GM23248 (cell line): ENCODE measurements at regions of chr17 and their contacts with region 1.

Region 1: DNA sequence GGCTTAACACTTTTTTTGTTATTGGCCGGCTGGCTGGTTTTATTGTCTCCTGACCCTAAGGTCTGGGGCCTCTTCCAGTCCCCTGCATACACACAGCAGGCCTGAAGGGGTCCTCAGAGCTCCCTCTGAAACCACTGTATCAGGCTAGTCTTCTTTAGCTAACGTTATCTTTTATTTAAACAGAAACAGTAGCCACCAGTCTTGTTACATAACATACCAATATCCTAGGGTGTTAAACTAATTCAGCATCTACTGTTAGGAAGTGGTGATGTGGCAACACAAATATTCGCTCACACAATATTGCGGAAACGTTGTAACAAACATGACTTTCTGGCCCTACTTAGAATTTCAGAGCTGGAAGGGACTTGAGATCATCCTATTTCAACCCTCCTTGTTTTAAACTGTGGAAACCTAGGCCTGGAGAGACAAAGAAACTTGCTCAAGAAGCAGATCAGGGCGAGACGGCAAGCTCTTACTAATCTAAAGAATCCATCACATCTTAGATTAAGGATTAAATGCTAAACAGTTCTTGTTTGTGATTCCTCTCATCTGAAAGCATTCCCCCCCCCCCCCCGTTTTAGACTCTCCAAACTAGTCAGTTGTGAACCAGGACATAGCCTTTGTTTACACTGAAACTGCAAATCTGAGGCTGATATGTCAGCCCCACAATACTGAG is 1.7 kb upstream of the YPEL2 start:
- DNase-seq: peak; percentile 85
- H3K4me3 ChIP-seq: no peak overlapping the region; the same call in 1 of the 2 replicates
- H3K27ac ChIP-seq: peak overlapping the region; percentile 49
- H3K4me1 ChIP-seq: peaks cover 28% of the 10 kb centered on the region
- H3K27me3 ChIP-seq: no peaks in the 10 kb centered on the region

Region 2: DNA sequence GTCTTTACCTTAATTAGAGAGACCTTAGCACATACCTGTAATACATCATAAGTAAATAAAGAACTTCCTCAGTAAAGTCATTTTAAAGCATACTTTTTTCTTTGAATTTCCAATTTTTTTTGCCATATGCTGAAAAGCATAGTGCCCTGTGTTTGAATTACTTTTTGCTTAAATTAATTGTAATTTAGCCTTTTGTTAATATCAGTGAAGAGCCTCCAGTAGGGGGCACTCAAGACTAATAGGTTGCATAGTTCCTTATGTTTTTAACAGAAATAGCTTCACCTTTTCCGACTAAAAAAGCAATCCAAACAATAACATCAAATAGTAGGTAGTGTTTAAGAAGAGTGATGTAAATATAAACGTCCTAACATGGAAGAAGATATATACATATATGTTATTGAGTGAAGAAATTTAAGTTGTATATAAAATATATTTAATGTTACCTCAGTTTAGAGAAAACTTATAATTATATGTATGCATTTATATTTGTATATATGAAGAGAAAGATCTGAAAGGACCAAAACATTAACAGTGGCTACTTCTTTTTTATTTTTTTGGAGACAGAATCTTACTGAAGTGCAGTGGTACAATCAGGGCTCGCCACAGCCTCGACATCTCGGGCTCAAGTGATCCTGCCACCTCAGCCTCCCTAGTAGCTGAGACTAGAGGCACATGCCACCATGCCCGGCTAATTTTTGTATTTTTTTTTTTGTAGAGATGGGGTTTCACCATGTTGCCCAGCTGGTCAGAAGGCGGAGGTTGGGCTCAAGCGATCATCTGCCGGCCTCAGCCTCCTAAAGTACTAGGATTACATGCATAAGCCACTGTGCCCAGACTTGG is 618.6 kb before region 1 on chr17:
- in situ Hi-C with region 1: no loop called
- DNase-seq: peak; percentile 77
- H3K4me3 ChIP-seq: no peak overlapping the region
- H3K27ac ChIP-seq: no peak overlapping the region
- H3K4me1 ChIP-seq: no peaks in the 10 kb centered on the region
- H3K27me3 ChIP-seq: no peaks in the 10 kb centered on the region

Region 3: DNA sequence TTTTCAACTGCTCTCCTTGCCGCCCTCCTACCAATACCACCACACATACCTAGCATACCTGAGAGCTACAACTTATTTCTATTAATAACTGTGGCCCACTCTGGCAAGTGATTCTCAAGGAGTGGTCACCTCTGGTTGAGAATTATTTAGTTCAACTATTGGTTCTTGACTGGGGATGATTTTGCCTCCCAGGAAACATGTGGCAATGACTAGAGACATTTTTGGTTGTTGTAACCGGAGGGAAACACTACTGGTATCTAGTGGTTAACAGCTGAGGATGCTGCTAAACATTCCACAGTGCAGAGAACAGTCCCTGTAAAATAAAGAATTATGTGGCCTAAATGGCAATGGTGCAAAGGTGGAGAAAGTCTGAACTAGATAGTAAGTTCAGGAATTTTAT is 319.8 kb before region 1 on chr17:
- in situ Hi-C with region 1: no loop called
- DNase-seq: no peak
- H3K4me3 ChIP-seq: no peak overlapping the region
- H3K27ac ChIP-seq: no peak overlapping the region
- H3K4me1 ChIP-seq: no peaks in the 10 kb centered on the region
- H3K27me3 ChIP-seq: no peaks in the 10 kb centered on the region

Region 4: DNA sequence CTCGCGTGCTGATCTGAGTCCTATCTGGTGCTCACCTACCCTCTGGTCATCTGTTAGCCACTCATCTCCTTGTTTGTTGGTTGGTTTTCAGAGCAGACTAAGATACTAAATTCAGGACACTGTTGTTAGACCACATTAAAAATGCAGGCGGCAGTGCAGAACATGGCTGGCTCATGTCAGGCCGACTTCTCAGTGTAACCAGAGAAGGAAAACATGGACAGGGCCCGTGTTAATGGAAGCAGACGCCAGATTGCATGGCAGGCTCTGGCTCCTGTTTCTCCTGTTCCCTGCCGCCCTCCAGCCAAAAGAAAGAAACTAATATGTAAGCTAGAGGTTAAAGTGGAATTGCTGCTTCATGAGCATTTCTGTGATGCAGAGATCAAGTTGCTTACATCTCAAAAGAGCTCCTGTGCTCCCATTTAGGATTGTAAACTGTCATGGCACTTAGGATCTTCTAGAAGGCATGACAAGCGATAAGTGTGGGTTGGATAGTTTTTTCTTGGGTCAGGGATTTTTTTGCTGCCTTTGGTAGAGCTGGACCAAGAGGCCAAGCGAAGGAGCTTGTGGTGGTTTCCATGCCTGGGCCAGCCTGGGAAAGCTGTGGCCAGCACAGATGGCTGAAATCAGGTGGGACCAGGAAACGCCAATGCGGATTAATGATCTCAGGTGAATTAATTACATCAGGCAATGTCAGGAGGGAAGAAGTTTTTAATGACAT is 57.7 kb after region 1 on chr17:
- in situ Hi-C with region 1: no loop called
- DNase-seq: peak; percentile 24
- H3K4me3 ChIP-seq: no peak overlapping the region
- H3K27ac ChIP-seq: no peak overlapping the region
- H3K4me1 ChIP-seq: no peaks in the 10 kb centered on the region
- H3K27me3 ChIP-seq: no peaks in the 10 kb centered on the region

Region 5: DNA sequence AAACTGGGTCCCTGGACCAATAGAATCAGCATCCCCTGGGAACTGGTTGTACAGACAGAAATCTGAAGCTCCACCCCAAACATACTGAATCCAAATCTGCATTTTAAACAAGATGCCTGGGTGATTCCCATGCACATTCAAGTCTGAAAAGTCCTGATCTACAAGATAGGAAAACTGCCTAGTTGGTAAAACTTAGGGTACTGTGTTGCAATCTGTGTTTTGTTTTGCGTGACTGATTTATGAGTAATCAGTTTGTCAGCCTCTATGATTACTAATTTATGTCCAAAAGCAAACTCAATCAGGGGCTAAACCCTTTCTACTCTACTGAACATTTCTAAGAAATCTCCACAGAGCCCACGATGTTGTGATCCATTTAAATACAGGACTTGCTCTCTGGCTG is 105.5 kb after region 1 on chr17:
- in situ Hi-C with region 1: loop called (anchors 5 kb)
- DNase-seq: peak; percentile 84
- H3K4me3 ChIP-seq: peak overlapping the region; percentile 11
- H3K27ac ChIP-seq: peak overlapping the region; percentile 25
- H3K4me1 ChIP-seq: peaks cover 21% of the 10 kb centered on the region
- H3K27me3 ChIP-seq: no peaks in the 10 kb centered on the region

Region 6: DNA sequence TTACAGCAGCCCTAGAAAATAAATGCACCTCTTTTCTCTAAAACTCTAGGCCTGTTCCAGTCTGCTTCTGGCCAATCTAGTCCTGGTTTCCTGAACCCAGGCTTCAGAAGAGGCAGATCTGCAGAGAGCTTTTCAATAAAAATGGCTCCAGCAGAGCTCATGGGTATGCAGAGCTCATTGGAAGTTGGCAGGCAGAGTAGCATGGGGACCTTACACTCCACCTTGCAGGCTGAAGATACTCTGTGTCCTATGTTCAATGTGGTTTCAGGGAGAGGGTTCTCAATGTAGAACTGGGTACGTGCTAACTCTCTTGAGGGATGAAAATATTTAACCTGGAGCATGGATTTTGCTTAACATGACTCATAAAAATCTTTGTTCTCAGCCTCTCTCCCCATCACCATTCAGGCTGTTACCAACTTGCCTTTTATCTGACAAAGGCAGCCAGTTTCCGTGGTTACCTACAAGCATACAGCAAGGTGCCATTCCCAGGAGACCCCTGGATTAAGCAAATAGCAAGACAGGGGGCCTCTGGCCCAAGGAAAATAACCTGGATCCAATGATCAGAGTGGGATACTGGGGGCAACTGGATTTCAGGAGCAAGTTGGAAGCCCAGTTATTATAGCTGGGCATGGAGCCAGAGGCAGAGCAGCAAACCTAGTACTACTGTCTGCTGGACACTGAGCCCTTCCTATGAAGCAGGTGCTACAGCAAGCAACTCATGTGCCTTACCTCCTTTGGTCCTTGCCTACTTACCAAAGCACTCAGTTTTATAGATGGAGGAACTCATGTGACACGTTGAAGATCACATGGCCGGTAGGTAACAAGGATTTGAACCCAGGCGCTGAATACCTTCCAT is 137.4 kb after region 1 on chr17:
- in situ Hi-C with region 1: no loop called
- DNase-seq: no peak
- H3K4me3 ChIP-seq: no peak overlapping the region
- H3K27ac ChIP-seq: no peak overlapping the region
- H3K4me1 ChIP-seq: no peaks in the 10 kb centered on the region
- H3K27me3 ChIP-seq: no peaks in the 10 kb centered on the region